GM12878 (cell line): ENCODE measurements at regions of chr5 and their contacts with region 1.

Region 1: DNA sequence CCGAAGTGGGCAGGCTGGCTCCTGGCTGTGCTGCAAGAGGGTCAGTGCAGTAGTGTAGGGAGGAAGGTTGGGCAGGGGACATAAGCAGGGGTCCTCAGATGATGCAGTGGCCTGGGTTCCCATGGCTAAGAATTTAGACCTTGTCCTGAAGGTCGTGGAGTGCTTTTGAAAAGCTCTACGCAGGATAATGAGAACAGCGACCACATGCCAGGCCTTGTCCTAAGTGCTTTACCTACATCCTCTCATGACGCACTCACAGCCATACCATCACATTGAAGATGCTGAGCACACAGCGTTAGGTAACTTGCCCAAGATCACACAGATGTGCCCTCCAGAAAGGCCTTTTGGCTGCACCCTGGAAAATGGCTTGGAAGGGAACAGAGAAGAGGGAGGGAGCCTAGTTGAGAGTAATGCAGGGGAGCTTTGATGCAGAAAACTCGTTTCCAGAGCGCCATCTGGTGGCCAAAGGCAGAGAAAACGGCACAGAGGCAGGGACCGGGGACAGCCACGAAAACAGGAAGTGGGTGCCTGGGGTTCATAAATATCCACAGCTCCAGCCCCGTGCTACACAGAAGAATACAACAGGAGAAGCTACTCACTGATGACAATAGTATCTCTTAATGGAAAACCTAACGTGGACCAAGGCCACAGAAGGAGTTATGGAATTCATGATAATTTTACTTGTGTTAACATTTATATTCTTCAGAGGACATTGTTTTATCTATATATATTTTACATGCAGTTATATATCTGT is 2.6 kb upstream of the PCDH12 start:
- DNase-seq: peak; percentile 64
- ATAC-seq: peak; percentile 99
- H3K4me3 ChIP-seq: no peak overlapping the region
- H3K27ac ChIP-seq: no peak overlapping the region
- H3K4me1 ChIP-seq: peaks cover 3% of the 10 kb centered on the region; the same call in 1 of the 2 replicates
- H3K27me3 ChIP-seq: no peaks in the 10 kb centered on the region
- CTCF ChIP-seq: peak; percentile 78 to 96 (median 92)
- EP300 ChIP-seq: 0 out of 4 replicates have a peak, but pooled peaks of 1 of the 2 experiments have one; percentile 26
- POLR2A ChIP-seq: no peak
- RAD21 ChIP-seq: peak; percentile 71

Region 2: DNA sequence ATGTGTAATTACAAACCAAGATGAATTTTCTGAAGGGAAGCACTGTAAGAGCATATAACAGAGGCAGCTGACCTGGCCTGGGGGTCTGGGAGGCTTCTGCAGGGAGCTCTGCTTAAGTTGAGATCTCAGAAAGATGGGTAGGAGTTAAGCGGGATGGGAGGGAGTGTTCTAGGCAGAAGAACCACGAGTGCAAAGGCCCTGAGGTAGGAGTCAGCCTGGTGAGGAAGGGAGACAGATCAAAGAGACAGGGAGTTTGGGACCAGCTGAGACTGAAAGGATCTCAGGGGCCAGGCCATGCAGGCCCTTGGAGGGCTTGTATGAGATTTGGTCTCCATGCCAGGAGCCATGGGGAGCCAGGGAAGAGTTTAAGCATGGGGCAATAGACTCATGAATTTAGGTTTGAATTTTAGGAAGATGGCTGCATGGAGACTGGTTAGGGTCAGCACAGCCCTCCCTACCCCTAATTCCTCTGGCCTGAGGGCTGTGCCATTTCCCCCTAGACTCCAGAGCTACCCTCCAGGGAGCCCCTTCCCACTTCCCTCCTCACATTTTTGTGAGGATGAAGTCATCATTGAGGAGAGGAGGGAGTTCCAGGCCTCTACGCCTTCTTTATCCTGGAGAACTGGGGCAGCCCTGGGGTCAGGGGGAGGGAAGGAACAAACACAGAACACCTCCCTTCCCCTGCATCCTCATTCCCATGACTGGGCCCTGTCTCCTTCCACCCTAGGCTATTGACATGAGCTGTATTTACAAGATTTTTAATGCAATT is 273.8 kb before region 1 on chr5:
- CTCF ChIA-PET with region 1: interaction called, 101 read pairs
- POLR2A ChIA-PET with region 1: interaction called, 4 read pairs
- RAD21 ChIA-PET with region 1: interaction called, 57 read pairs
- SMC1A ChIA-PET with region 1: interaction called, 46 read pairs
- in situ Hi-C with region 1: loop called (anchors 5 kb)
- intact Hi-C with region 1: loop called (anchors 1 kb)
- DNase-seq: no peak
- ATAC-seq: no peak
- H3K4me3 ChIP-seq: no peak overlapping the region
- H3K27ac ChIP-seq: no peak overlapping the region
- H3K4me1 ChIP-seq: no peaks in the 10 kb centered on the region; the same call in 1 of the 2 replicates
- H3K27me3 ChIP-seq: peaks cover 2 to 11% of the 10 kb centered on the region in 2 experiments
- CTCF ChIP-seq: no peak
- EP300 ChIP-seq: no peak
- POLR2A ChIP-seq: no peak
- RAD21 ChIP-seq: no peak

Region 3: GRCh38 chr5:141868541-141869439 is 91.8 kb before region 1 on chr5:
- CTCF ChIA-PET with region 1: no interaction called
- POLR2A ChIA-PET with region 1: no interaction called
- RAD21 ChIA-PET with region 1: no interaction called
- SMC1A ChIA-PET with region 1: no interaction called
- in situ Hi-C with region 1: no loop called
- intact Hi-C with region 1: no loop called
- DNase-seq: no peak
- ATAC-seq: no peak
- H3K4me3 ChIP-seq: no peak overlapping the region
- H3K27ac ChIP-seq: no peak overlapping the region
- H3K4me1 ChIP-seq: no peaks in the 10 kb centered on the region
- H3K27me3 ChIP-seq: peaks cover 4 to 11% of the 10 kb centered on the region in 2 experiments; a peak in 3 of 4 replicates
- CTCF ChIP-seq: no peak
- EP300 ChIP-seq: no peak
- POLR2A ChIP-seq: no peak
- RAD21 ChIP-seq: no peak

Region 4: GRCh38 chr5:141878711-141879425 is 81.8 kb before region 1 on chr5:
- CTCF ChIA-PET with region 1: interaction called, 67 read pairs
- POLR2A ChIA-PET with region 1: no interaction called
- RAD21 ChIA-PET with region 1: interaction called, 53 read pairs
- SMC1A ChIA-PET with region 1: interaction called, 32 read pairs
- in situ Hi-C with region 1: no loop called
- intact Hi-C with region 1: loop called (anchors 2 kb)
- DNase-seq: peak; percentile 71
- ATAC-seq: peak; percentile 89
- H3K4me3 ChIP-seq: peak overlapping the region; percentile 28; the same call in 1 of the 2 replicates
- H3K27ac ChIP-seq: no peak overlapping the region
- H3K4me1 ChIP-seq: peaks cover 37% of the 10 kb centered on the region
- H3K27me3 ChIP-seq: peaks cover 22 to 32% of the 10 kb centered on the region in 2 experiments
- CTCF ChIP-seq: peak; percentile 97 to 98 (median 97); a peak in 5 of 6 replicates
- EP300 ChIP-seq: no peak
- POLR2A ChIP-seq: no peak
- RAD21 ChIP-seq: peak; percentile 89

Region 5: GRCh38 chr5:141923448-141924352 is 36.9 kb before region 1 on chr5 and contains the start of gene DELE1:
- CTCF ChIA-PET with region 1: interaction called, 39 read pairs
- POLR2A ChIA-PET with region 1: interaction called, 10 read pairs
- RAD21 ChIA-PET with region 1: interaction called, 10 read pairs
- SMC1A ChIA-PET with region 1: interaction called, 26 read pairs
- in situ Hi-C with region 1: no loop called
- intact Hi-C with region 1: no loop called
- DNase-seq: peak; percentile 70
- ATAC-seq: peak; percentile 98
- H3K4me3 ChIP-seq: peak within 1 kb of the TSS; percentile 94
- H3K27ac ChIP-seq: peak within 1 kb of the TSS; percentile 90
- H3K4me1 ChIP-seq: peaks cover 4% of the 10 kb centered on the region; the same call in 1 of the 2 replicates
- H3K27me3 ChIP-seq: no peaks in the 10 kb centered on the region
- CTCF ChIP-seq: no peak
- EP300 ChIP-seq: 0 out of 4 replicates have a peak, but pooled peaks of 1 of the 2 experiments have one; percentile 6
- POLR2A ChIP-seq: peak; percentile 98
- RAD21 ChIP-seq: no peak
- polyA plus RNA-seq, gene DELE1: 18.9 to 21.4 TPM

Region 6: DNA sequence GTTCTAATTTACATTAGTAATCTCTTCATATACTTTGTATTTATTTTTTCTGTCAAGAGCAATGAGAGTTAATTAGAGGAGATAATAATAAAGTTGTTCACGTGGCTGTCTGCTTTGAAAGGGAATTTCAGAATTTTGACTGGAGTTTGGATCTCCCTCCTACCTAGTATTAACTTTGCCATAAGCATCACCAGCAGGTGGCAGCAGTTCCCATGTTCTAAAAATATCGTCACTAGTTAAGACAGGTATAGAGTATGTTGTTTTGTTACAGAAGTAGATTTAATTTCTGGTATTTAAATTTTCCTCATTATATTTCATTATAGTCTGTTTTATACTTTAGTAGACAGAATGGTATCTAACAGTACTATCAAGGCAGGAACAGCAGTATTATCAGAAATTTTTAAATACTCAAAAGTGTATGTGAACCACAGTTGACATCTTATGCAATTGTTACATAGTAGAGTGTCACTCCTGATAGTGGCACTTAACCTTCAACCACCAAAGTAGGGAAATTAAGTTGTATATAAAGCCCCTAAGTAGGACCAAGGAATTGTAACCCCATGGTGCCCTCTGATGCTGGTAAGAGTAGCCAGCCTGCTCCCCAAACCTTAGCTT is 31.8 kb after region 1 on chr5:
- CTCF ChIA-PET with region 1: interaction called, 18 read pairs
- POLR2A ChIA-PET with region 1: no interaction called
- RAD21 ChIA-PET with region 1: interaction called, 6 read pairs
- SMC1A ChIA-PET with region 1: interaction called, 6 read pairs
- in situ Hi-C with region 1: no loop called
- intact Hi-C with region 1: no loop called
- DNase-seq: no peak
- ATAC-seq: peak; percentile 83
- H3K4me3 ChIP-seq: no peak overlapping the region
- H3K27ac ChIP-seq: no peak overlapping the region
- H3K4me1 ChIP-seq: no peaks in the 10 kb centered on the region
- H3K27me3 ChIP-seq: no peaks in the 10 kb centered on the region
- CTCF ChIP-seq: peak; percentile 60 to 71 (median 64)
- EP300 ChIP-seq: no peak
- POLR2A ChIP-seq: no peak
- RAD21 ChIP-seq: peak; percentile 64